Left colon (tissue), 2 donors: ENCODE measurements at regions of chr1 and their contacts with region 1.

Region 1: DNA sequence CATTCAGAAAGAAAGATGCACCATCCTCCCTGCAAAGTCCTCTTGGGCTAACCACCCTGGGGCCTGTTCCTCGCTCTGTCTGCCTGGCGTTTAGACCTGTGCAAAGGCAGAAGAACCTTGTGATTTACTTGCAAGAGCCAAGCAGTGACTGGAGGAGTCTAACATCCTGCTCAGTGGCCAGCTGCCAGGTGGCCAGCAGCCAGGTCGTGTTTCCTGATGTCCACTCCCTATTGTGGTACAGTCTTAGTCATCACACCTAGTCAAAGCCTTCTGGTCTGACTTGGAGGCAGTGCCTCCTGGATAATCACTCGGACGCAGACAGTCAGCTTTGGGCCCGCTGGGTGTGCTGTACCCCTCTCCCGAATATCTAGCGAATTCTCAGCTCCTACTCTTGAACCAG is 118.1 kb downstream of the PGBD5 start:
- DNase-seq: peak; percentile 91 to 94
- ATAC-seq: peak; percentile 97

Region 2: GRCh38 chr1:229661897-229662296 is 646.1 kb before region 1 on chr1:
- intact Hi-C with region 1: loop called in 1 of 2 experiments (anchors 2 kb)
- DNase-seq: no peak
- ATAC-seq: no peak